MCF 10A (cell line): ENCODE measurements at regions of chr2 and their contacts with region 1.

Region 1: GRCh38 chr2:157492189-157492773 is 48.4 kb upstream of the CYTIP start:
- DNase-seq: peak; percentile 73
- H3K4me3 Mint-ChIP-seq: no peak overlapping the region
- H3K27ac Mint-ChIP-seq: no peak overlapping the region
- H3K4me1 Mint-ChIP-seq: peaks cover 21% of the 10 kb centered on the region
- H3K27me3 Mint-ChIP-seq: no peaks in the 10 kb centered on the region
- CTCF ChIP-seq: peak; percentile 58

Region 2: DNA sequence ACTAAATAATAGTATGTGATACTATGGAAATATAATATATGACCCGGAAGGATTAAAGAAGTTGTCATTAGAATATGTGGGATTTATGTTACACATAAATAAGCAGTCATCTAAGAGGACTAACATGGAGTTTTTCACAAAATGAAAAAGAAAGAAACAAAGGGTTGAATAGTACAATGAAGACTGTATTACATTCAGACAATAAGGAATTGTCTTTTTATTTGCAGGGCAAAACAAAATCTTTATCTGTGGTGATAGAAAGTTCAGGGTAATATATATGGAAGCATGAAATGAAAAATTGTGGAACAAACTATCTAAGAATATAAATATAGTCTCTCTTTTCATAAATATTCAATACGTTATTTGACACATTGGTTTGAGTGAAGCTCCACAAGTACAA is 172.5 kb before region 1 on chr2:
- CTCF ChIA-PET with region 1: no interaction called
- POLR2A ChIA-PET with region 1: no interaction called
- intact Hi-C with region 1: no loop called
- DNase-seq: no peak
- H3K4me3 Mint-ChIP-seq: no peak overlapping the region
- H3K27ac Mint-ChIP-seq: no peak overlapping the region
- H3K4me1 Mint-ChIP-seq: no peaks in the 10 kb centered on the region
- H3K27me3 Mint-ChIP-seq: no peaks in the 10 kb centered on the region
- CTCF ChIP-seq: no peak

Region 3: GRCh38 chr2:157480182-157480961 is 11.9 kb before region 1 on chr2:
- CTCF ChIA-PET with region 1: interaction called, 12 read pairs
- POLR2A ChIA-PET with region 1: interaction called, 4 read pairs
- intact Hi-C with region 1: no loop called
- DNase-seq: peak; percentile 73
- H3K4me3 Mint-ChIP-seq: no peak overlapping the region
- H3K27ac Mint-ChIP-seq: no peak overlapping the region
- H3K4me1 Mint-ChIP-seq: peaks cover 20% of the 10 kb centered on the region
- H3K27me3 Mint-ChIP-seq: no peaks in the 10 kb centered on the region
- CTCF ChIP-seq: no peak

Region 4: GRCh38 chr2:157761520-157761919 is 269.2 kb after region 1 on chr2:
- CTCF ChIA-PET with region 1: interaction called, 3 read pairs
- POLR2A ChIA-PET with region 1: no interaction called
- intact Hi-C with region 1: loop called (anchors 5 kb)
- DNase-seq: no peak
- H3K4me3 Mint-ChIP-seq: no peak overlapping the region
- H3K27ac Mint-ChIP-seq: no peak overlapping the region
- H3K4me1 Mint-ChIP-seq: peaks cover 6% of the 10 kb centered on the region
- H3K27me3 Mint-ChIP-seq: no peaks in the 10 kb centered on the region
- CTCF ChIP-seq: no peak

Region 5: GRCh38 chr2:157777427-157777826 is 285.1 kb after region 1 on chr2:
- CTCF ChIA-PET with region 1: interaction called, 4 read pairs
- POLR2A ChIA-PET with region 1: no interaction called
- intact Hi-C with region 1: loop called (anchors 5 kb)
- DNase-seq: peak; percentile 58
- H3K4me3 Mint-ChIP-seq: no peak overlapping the region
- H3K27ac Mint-ChIP-seq: no peak overlapping the region
- H3K4me1 Mint-ChIP-seq: no peaks in the 10 kb centered on the region
- H3K27me3 Mint-ChIP-seq: no peaks in the 10 kb centered on the region
- CTCF ChIP-seq: peak; percentile 54

Region 6: DNA sequence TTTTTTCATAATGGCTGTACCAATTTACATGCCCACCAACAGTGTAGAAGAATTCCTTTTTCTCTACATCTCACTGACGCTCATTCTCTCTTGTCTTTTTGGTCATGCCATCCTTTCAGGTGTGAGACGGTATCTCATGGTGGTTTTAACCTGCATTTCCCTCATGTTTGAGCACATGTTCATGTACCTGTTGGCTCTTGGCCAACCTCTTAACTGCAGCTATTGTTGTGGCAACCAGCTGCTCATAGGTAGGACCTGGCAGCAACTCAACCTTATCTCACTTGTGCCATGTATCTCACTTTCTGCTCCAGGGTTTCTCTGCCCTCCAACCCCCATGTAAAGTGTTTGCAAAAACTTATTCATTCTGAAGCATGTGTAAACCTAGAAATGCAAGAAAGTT is 776.9 kb after region 1 on chr2:
- CTCF ChIA-PET with region 1: no interaction called
- POLR2A ChIA-PET with region 1: no interaction called
- intact Hi-C with region 1: no loop called
- DNase-seq: peak; percentile 8
- H3K4me3 Mint-ChIP-seq: no peak overlapping the region
- H3K27ac Mint-ChIP-seq: no peak overlapping the region
- H3K4me1 Mint-ChIP-seq: peaks cover 8% of the 10 kb centered on the region
- H3K27me3 Mint-ChIP-seq: peaks cover 23% of the 10 kb centered on the region
- CTCF ChIP-seq: no peak